Naive thymus-derived CD4-positive, alpha-beta T cell (primary cell): ENCODE measurements at regions of chr22 and their contacts with region 1.

Region 1: GRCh38 chr22:31345331-31346254 is 553 bp downstream of the PATZ1 start:
- DNase-seq: peak; percentile 91 to 95 (median 93)
- ATAC-seq: peak; percentile 83
- H3K4me3 ChIP-seq: peak overlapping the region; percentile 60
- H3K4me3 Mint-ChIP-seq: peak overlapping the region; percentile 85 to 91 (median 88)
- H3K27ac ChIP-seq: peak overlapping the region; percentile 74
- H3K27ac Mint-ChIP-seq: peak overlapping the region; percentile 81 to 97 (median 92)
- H3K4me1 ChIP-seq: peaks cover 26 to 42% of the 10 kb centered on the region in 2 donors
- H3K4me1 Mint-ChIP-seq: peaks cover 32 to 57% (median 48%) of the 10 kb centered on the region in 7 donors
- H3K27me3 ChIP-seq: no peaks in the 10 kb centered on the region
- H3K27me3 Mint-ChIP-seq: peaks cover 0 to 4% (median 0%) of the 10 kb centered on the region in 5 donors

Region 2: GRCh38 chr22:30754971-30755756 is 590.4 kb before region 1 on chr22:
- CTCF ChIA-PET with region 1: no interaction called
- POLR2A ChIA-PET with region 1: no interaction called
- intact Hi-C with region 1: no loop called
- DNase-seq: peak in 8 of 9 donors; percentile 12 to 44 (median 30)
- ATAC-seq: peak; percentile 67
- H3K4me3 ChIP-seq: no peak overlapping the region
- H3K4me3 Mint-ChIP-seq: no peak overlapping the region
- H3K27ac ChIP-seq: no peak overlapping the region
- H3K27ac Mint-ChIP-seq: no peak overlapping the region
- H3K4me1 ChIP-seq: no peaks in the 10 kb centered on the region
- H3K4me1 Mint-ChIP-seq: peaks cover 0 to 3% (median 0%) of the 10 kb centered on the region in 7 donors
- H3K27me3 ChIP-seq: no peaks in the 10 kb centered on the region
- H3K27me3 Mint-ChIP-seq: peaks cover 0 to 4% (median 0%) of the 10 kb centered on the region in 5 donors

Region 3: DNA sequence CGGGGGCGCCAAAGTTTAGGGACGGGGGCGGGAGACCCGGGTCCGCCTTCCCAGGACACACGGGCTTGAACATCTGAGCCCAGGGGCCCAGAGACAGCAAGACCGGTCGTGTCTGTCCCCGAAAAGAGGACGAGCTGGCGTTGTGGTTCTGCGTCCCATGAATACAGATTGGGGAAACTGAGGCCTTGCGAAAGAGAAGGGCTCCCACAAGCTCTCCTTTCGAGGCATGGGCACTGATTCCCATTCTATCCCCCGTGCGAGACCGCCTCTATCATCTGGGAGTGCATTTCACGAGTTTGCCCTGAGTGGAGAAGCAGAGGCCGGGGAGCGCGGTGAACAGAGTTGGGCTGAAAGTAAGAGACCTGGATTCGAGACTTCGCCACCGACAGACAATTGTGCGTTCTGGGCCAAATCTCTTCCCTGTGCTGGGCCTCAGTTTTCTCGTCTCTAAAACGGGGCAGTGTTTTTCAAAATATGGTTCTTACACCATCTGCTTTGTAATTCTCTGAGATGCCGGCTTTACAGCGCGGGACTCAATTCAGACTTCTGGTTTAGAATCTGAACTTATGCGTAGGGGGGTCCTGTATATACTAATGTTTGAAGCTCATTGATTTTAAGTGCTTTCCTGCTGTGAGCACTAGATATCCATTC is 185.1 kb before region 1 on chr22:
- CTCF ChIA-PET with region 1: no interaction called
- POLR2A ChIA-PET with region 1: no interaction called
- intact Hi-C with region 1: loop called in 1 of 2 experiments (anchors 1 kb)
- DNase-seq: peak in 3 of 9 donors; percentile 5 to 26 (median 9)
- ATAC-seq: peak; percentile 47
- H3K4me3 ChIP-seq: peak overlapping the region; percentile 76
- H3K4me3 Mint-ChIP-seq: peak overlapping the region; percentile 87 to 100 (median 99)
- H3K27ac ChIP-seq: peak overlapping the region; percentile 74
- H3K27ac Mint-ChIP-seq: peak overlapping the region; percentile 91 to 100 (median 97)
- H3K4me1 ChIP-seq: peaks cover 12 to 17% of the 10 kb centered on the region in 2 donors
- H3K4me1 Mint-ChIP-seq: peaks cover 25 to 42% (median 35%) of the 10 kb centered on the region in 7 donors
- H3K27me3 ChIP-seq: no peaks in the 10 kb centered on the region
- H3K27me3 Mint-ChIP-seq: peaks cover 0 to 13% (median 0%) of the 10 kb centered on the region in 5 donors

Region 4: DNA sequence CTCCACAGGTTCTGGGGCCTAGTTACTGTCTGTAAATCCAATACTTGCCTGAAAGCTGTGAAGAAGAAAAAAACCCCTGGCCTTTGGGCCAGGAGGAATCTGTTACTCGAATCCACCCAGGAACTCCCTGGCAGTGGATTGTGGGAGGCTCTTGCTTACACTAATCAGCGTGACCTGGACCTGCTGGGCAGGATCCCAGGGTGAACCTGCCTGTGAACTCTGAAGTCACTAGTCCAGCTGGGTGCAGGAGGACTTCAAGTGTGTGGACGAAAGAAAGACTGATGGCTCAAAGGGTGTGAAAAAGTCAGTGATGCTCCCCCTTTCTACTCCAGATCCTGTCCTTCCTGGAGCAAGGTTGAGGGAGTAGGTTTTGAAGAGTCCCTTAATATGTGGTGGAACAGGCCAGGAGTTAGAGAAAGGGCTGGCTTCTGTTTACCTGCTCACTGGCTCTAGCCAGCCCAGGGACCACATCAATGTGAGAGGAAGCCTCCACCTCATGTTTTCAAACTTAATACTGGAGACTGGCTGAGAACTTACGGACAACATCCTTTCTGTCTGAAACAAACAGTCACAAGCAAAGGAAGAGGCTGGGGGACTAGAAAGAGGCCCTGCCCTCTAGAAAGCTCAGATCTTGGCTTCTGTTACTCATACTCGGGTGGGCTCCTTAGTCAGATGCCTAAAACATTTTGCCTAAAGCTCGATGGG is 66.8 kb before region 1 on chr22:
- CTCF ChIA-PET with region 1: interaction called, 3 read pairs
- POLR2A ChIA-PET with region 1: interaction called, 23 read pairs
- intact Hi-C with region 1: loop called in 1 of 2 experiments (anchors 5 kb)
- DNase-seq: peak in 7 of 9 donors; percentile 67 to 85 (median 79)
- ATAC-seq: peak; percentile 75
- H3K4me3 ChIP-seq: peak overlapping the region; percentile 35
- H3K4me3 Mint-ChIP-seq: peak overlapping the region; percentile 74 to 97 (median 80)
- H3K27ac ChIP-seq: peak overlapping the region; percentile 100
- H3K27ac Mint-ChIP-seq: peak overlapping the region; percentile 96 to 100 (median 99)
- H3K4me1 ChIP-seq: peaks cover 33 to 94% of the 10 kb centered on the region in 2 donors
- H3K4me1 Mint-ChIP-seq: peaks cover 52 to 98% (median 94%) of the 10 kb centered on the region in 7 donors
- H3K27me3 ChIP-seq: no peaks in the 10 kb centered on the region
- H3K27me3 Mint-ChIP-seq: no peaks in the 10 kb centered on the region

Region 5: DNA sequence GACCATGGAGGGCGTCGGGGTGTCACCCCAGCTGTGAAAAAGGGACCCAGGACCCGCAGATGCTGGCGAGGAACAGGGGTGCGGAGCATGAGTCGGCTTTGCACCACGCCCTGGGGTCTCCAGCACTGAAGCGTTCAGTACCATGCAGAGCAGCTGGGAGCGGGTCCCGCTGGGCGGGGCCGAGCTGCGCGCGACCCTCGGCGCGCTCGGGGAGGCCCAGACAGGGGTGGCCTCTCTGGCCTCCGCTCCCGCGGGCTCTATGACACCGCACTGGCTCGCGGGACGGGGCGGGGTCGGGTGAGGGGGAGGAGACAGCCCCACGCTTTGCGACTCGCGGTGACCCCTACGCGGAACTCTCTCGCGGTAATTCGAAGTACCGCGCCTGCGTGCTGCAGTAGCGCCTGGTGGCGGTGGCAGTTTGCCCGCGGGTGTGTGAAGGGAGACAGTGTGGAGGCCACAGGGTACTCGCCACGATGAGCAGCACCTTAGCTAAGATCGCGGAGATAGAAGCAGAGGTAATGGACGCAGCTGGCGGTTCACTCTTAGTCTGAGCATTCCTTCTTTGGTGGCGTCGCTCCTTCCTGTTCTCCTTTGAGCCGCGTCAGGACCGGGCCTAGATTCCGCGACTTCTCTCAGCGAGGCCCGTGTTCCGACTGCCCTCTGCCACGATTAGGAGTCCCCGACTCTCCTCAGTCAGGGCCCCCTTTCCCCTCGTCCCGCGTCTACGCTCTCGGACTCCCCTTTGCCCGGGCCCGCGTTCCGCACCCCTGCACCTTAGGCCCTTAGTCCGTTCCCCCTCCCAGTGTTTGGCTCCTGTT is 53.8 kb after region 1 on chr22 and contains the start of gene DRG1:
- CTCF ChIA-PET with region 1: interaction called, 5 read pairs
- POLR2A ChIA-PET with region 1: interaction called, 42 read pairs
- intact Hi-C with region 1: loop called (anchors 1 kb)
- DNase-seq: peak; percentile 90 to 98 (median 93)
- ATAC-seq: peak; percentile 99
- H3K4me3 ChIP-seq: peak within 1 kb of the TSS; percentile 88
- H3K4me3 Mint-ChIP-seq: peak within 1 kb of the TSS; percentile 92 to 99 (median 96)
- H3K27ac ChIP-seq: peak within 1 kb of the TSS; percentile 91
- H3K27ac Mint-ChIP-seq: peak within 1 kb of the TSS; percentile 85 to 97 (median 94)
- H3K4me1 ChIP-seq: peaks cover 10 to 15% of the 10 kb centered on the region in 2 donors
- H3K4me1 Mint-ChIP-seq: peaks cover 5 to 35% (median 22%) of the 10 kb centered on the region in 7 donors
- H3K27me3 ChIP-seq: no peaks in the 10 kb centered on the region
- H3K27me3 Mint-ChIP-seq: no peaks in the 10 kb centered on the region
- total RNA-seq, gene DRG1: 53.3 to 109 (median 84.4) TPM

Region 6: DNA sequence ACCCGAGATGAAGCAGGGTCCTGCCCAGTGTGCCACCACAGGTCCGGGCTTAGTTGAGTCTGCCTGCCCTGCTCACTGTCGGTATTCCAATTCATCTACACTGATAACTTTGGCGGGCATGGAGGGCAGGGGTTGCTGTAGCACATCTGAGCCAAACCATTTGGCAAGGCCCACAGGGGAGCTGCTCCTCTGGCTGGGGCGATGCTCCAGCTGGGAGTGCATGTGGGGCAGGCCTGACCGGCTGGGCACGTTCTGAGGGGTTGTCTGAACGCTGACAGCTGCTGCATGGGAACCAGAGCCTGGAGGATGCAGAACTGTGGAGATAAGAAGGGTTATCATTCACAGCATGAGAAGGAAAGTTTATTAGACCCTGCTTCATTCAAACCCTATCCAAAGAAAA is 94.2 kb after region 1 on chr22:
- CTCF ChIA-PET with region 1: no interaction called
- POLR2A ChIA-PET with region 1: no interaction called
- intact Hi-C with region 1: no loop called
- DNase-seq: no peak
- ATAC-seq: no peak
- H3K4me3 ChIP-seq: no peak overlapping the region
- H3K4me3 Mint-ChIP-seq: no peak overlapping the region
- H3K27ac ChIP-seq: no peak overlapping the region
- H3K27ac Mint-ChIP-seq: no peak overlapping the region
- H3K4me1 ChIP-seq: no peaks in the 10 kb centered on the region
- H3K4me1 Mint-ChIP-seq: peaks cover 0 to 9% (median under 1%) of the 10 kb centered on the region in 7 donors
- H3K27me3 ChIP-seq: no peaks in the 10 kb centered on the region
- H3K27me3 Mint-ChIP-seq: no peaks in the 10 kb centered on the region

Region 7: GRCh38 chr22:31496007-31496734 is 150.6 kb after region 1 on chr22 and contains the start of gene SFI1:
- CTCF ChIA-PET with region 1: no interaction called
- POLR2A ChIA-PET with region 1: interaction called, 4 read pairs
- intact Hi-C with region 1: loop called (anchors 1 to 2 kb)
- DNase-seq: peak; percentile 91 to 98 (median 96)
- ATAC-seq: peak; percentile 93
- H3K4me3 ChIP-seq: peak within 1 kb of the TSS; percentile 83
- H3K4me3 Mint-ChIP-seq: peak within 1 kb of the TSS; percentile 85 to 99 (median 96)
- H3K27ac ChIP-seq: peak within 1 kb of the TSS; percentile 92
- H3K27ac Mint-ChIP-seq: peak within 1 kb of the TSS; percentile 92 to 99 (median 98)
- H3K4me1 ChIP-seq: peaks cover 18 to 20% of the 10 kb centered on the region in 2 donors
- H3K4me1 Mint-ChIP-seq: peaks cover 7 to 50% (median 43%) of the 10 kb centered on the region in 7 donors
- H3K27me3 ChIP-seq: no peaks in the 10 kb centered on the region
- H3K27me3 Mint-ChIP-seq: no peaks in the 10 kb centered on the region
- total RNA-seq, gene SFI1: 196 to 359 (median 343) TPM

Region 8: DNA sequence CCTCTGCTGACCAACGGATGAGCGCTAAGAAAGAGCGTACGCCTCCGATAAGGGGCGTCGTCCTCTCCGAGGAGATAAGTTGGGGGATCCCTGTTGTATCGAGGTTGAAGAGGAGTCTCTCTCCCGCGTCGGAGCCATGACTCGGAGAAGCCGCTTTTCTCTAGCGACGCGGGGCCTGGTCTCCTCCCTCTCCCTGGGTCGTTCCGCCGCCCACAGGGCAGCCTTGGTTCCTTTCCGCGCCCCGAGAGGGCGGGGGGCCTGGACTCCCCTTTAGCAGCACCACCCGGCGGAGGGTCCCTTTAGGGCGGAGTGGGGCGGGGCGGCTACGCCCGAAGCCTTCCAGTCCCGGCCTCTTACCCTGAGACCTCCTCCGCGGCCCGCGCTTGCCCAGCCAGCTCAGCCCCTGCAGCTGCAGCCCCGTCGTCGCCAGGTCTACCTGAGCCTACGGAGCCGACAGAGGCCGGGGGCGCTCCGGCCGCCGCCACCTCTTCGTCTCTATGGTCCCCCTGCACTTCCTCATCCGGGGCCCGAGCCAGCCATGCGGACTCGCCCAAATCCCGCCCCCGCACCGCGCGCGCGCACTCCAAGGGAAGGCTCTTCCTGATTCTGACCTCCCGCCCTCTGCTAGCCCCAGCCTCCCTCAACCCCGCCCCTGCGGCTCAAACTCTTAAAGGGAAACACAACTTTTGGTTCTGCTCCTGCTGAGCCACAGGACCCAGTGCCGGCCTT is 404.2 kb after region 1 on chr22 and contains the start of gene PRR14L:
- CTCF ChIA-PET with region 1: no interaction called
- POLR2A ChIA-PET with region 1: interaction called, 4 read pairs
- intact Hi-C with region 1: loop called (anchors 1 to 5 kb)
- DNase-seq: peak; percentile 94 to 100 (median 98)
- ATAC-seq: peak; percentile 86
- H3K4me3 ChIP-seq: peak within 1 kb of the TSS; percentile 92
- H3K4me3 Mint-ChIP-seq: peak within 1 kb of the TSS; percentile 87 to 97 (median 94)
- H3K27ac ChIP-seq: peak within 1 kb of the TSS; percentile 83
- H3K27ac Mint-ChIP-seq: peak within 1 kb of the TSS; percentile 82 to 98 (median 96)
- H3K4me1 ChIP-seq: peaks cover 31 to 37% of the 10 kb centered on the region in 2 donors
- H3K4me1 Mint-ChIP-seq: peaks cover 36 to 65% (median 59%) of the 10 kb centered on the region in 7 donors
- H3K27me3 ChIP-seq: no peaks in the 10 kb centered on the region
- H3K27me3 Mint-ChIP-seq: peaks cover 0 to 2% (median 0%) of the 10 kb centered on the region in 5 donors
- total RNA-seq, gene PRR14L: 43.1 to 82.6 (median 66.9) TPM